Heart left ventricle (tissue), 16 donors: ENCODE measurements at regions of chr4 and their contacts with region 1.

Region 1: GRCh38 chr4:119099227-119099801 is 36.3 kb upstream of the MYOZ2 start:
- DNase-seq: no peak
- ATAC-seq: peak in 3 of 4 donors; percentile 5 to 43 (median 12)
- H3K4me3 ChIP-seq: no peak overlapping the region
- H3K27ac ChIP-seq: peak overlapping the region in 4 of 12 donors; percentile 14 to 47 (median 36)
- H3K4me1 ChIP-seq: peaks cover 0 to 49% (median 32%) of the 10 kb centered on the region in 12 donors
- H3K27me3 ChIP-seq: no peaks in the 10 kb centered on the region
- CTCF ChIP-seq: no peak
- POLR2A ChIP-seq: no peak

Region 2: DNA sequence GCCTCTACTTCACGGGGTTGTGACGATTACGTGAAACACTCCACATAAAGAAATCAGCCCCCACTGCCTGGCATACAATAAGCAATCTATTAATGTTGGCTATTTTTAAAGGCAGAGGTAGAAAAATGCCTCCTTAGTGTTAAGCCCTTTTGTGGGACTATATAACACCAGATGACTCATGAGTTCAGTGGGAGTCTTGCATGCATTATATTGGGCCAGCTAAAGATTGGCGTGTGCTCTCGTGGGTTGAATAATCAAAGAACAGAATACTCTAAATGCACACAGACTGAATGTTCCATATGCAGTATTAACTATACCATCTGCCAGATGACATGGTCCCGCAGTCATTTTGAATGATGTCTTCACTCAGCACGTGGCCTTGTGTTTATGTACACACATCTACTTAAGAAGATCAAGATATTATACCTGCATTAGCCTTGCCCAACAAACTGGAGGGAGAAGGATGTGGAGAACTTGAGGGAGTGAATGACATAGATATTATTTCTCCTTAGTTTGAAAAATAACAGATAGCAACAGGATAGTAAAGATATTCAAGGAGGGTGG is 48.7 kb before region 1 on chr4:
- intact Hi-C with region 1: loop called in 1 of 10 experiments (anchors 5 kb)
- DNase-seq: no peak
- ATAC-seq: no peak
- H3K4me3 ChIP-seq: no peak overlapping the region
- H3K27ac ChIP-seq: no peak overlapping the region
- H3K4me1 ChIP-seq: peaks cover 0 to 37% (median 16%) of the 10 kb centered on the region in 12 donors
- H3K27me3 ChIP-seq: no peaks in the 10 kb centered on the region
- CTCF ChIP-seq: no peak
- POLR2A ChIP-seq: no peak

Region 3: DNA sequence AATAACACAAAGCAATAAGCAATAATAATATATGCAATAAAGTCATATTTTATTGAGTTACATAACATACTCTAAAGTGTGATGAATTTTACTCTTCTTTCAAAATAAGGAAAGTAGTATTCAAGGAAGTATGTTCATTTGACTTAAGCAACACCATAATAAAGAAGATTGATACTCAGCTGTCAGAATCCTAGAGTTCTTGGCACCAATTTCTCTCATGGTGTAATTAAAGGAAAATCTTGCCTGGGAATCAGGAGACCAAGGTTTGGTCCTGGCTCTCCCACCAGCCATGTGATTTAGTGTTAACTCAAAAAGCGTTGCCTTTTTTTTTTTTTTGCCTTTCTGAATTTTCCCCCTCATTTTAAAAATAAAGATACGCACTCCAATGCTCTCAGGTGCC is 53.4 kb after region 1 on chr4:
- intact Hi-C with region 1: no loop called
- DNase-seq: no peak
- ATAC-seq: no peak
- H3K4me3 ChIP-seq: no peak overlapping the region
- H3K27ac ChIP-seq: peak overlapping the region in 6 of 12 donors; percentile 67 to 88 (median 76)
- H3K4me1 ChIP-seq: peaks cover 0 to 83% (median 16%) of the 10 kb centered on the region in 12 donors
- H3K27me3 ChIP-seq: no peaks in the 10 kb centered on the region
- CTCF ChIP-seq: no peak
- POLR2A ChIP-seq: no peak